ENCODE measurements at regions of chr11 and their contacts with region 1.

Region 1: GRCh38 chr11:75022759-75023396 is 34.1 kb downstream of the NEU3 start:
- DNase-seq: peak; percentile 78
- ATAC-seq: peak; percentile 78
- H3K4me3 ChIP-seq: no peak overlapping the region
- H3K4me3 Mint-ChIP-seq: no peak overlapping the region
- H3K27ac ChIP-seq: no peak overlapping the region
- H3K27ac Mint-ChIP-seq: no peak overlapping the region
- H3K4me1 ChIP-seq: no peaks in the 10 kb centered on the region
- H3K4me1 Mint-ChIP-seq: no peaks in the 10 kb centered on the region
- H3K27me3 ChIP-seq: no peaks in the 10 kb centered on the region
- H3K27me3 Mint-ChIP-seq: no peaks in the 10 kb centered on the region
- CTCF ChIP-seq: peak; percentile 99

Region 2: GRCh38 chr11:75270896-75271418 is 248.1 kb after region 1 on chr11:
- CTCF ChIA-PET with region 1: interaction called, 17 read pairs
- POLR2A ChIA-PET with region 1: no interaction called
- intact Hi-C with region 1: no loop called
- DNase-seq: peak; percentile 54
- ATAC-seq: no peak
- H3K4me3 ChIP-seq: no peak overlapping the region
- H3K4me3 Mint-ChIP-seq: no peak overlapping the region
- H3K27ac ChIP-seq: no peak overlapping the region
- H3K27ac Mint-ChIP-seq: no peak overlapping the region
- H3K4me1 ChIP-seq: peaks cover 9 to 14% of the 10 kb centered on the region in 2 donors
- H3K4me1 Mint-ChIP-seq: peaks cover 14% of the 10 kb centered on the region
- H3K27me3 ChIP-seq: no peaks in the 10 kb centered on the region
- H3K27me3 Mint-ChIP-seq: no peaks in the 10 kb centered on the region
- CTCF ChIP-seq: peak; percentile 64

Measured in B cell (primary cell).